Activated T-helper 1 cell treated with anti-CD3 and anti-CD28 coated beads, Interleukin-12 subunit alpha, Interleukin-12 subunit beta, Interleukin-2, Interleukin-4 antibody, amounts not matched to agents 30 ng/mL and 10 ng/mL and 1 ng/mL, durations not matched to agents 14 hours and 24 hours and 36 hours (primary cell): ENCODE measurements at regions of chr11 and their contacts with region 1.

Region 1: DNA sequence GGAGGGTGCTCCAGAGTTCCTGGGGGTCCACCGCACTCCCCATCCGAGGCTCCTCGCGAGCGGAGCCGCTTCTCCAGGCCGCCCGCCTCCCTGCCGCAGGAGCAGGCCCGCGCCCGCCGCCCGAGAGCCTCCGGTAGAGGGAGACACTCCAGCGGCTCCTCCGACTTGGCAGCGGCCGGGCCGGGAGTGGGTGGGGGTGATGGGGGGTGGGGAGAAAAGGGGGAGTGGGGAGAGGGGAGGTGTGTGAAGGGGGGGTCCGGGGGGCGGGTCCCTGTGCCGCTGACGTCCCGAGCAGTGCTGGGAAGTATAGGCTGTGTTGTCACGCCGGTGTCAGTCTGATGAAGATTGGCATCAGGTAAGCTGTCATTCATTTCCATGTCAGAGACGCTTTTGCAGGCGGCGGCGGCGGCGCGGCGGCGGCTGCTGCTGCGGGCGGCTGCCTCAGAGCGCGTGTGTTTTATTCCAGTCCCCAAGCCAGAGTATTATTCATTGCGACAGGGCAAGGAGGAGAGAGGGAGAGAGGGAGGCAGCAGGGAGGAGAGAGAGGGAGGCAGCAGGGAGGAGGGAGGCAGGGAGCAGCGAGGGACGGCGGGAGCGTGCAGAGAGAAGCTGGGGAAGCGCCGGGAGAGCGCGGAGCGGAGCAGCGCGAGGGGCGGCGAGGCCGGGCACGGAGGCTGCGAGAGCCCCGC is at the start of gene PKNOX2:
- DNase-seq: peak; percentile 39
- H3K4me3 Mint-ChIP-seq: peak within 1 kb of the TSS; percentile 91
- H3K27ac Mint-ChIP-seq: no peak within 1 kb of the TSS
- H3K4me1 Mint-ChIP-seq: peaks cover 16% of the 10 kb centered on the region
- H3K27me3 Mint-ChIP-seq: peaks cover 65% of the 10 kb centered on the region
- total RNA-seq, gene PKNOX2: not detected in 2 replicates

Region 2: GRCh38 chr11:124724979-124725718 is 439.4 kb before region 1 on chr11:
- intact Hi-C with region 1: no loop called
- DNase-seq: no peak
- H3K4me3 Mint-ChIP-seq: no peak overlapping the region
- H3K27ac Mint-ChIP-seq: no peak overlapping the region
- H3K4me1 Mint-ChIP-seq: no peaks in the 10 kb centered on the region
- H3K27me3 Mint-ChIP-seq: peaks cover 20% of the 10 kb centered on the region

Region 3: GRCh38 chr11:124865921-124866583 is 298.5 kb before region 1 on chr11:
- intact Hi-C with region 1: loop called (anchors 5 kb)
- DNase-seq: peak; percentile 28
- H3K4me3 Mint-ChIP-seq: no peak overlapping the region
- H3K27ac Mint-ChIP-seq: no peak overlapping the region
- H3K4me1 Mint-ChIP-seq: peaks cover 16% of the 10 kb centered on the region
- H3K27me3 Mint-ChIP-seq: peaks cover 88% of the 10 kb centered on the region

Region 4: GRCh38 chr11:125404776-125405435 is 240.3 kb after region 1 on chr11:
- intact Hi-C with region 1: loop called (anchors 10 kb)
- DNase-seq: peak; percentile 48
- H3K4me3 Mint-ChIP-seq: no peak overlapping the region
- H3K27ac Mint-ChIP-seq: no peak overlapping the region
- H3K4me1 Mint-ChIP-seq: peaks cover 7% of the 10 kb centered on the region
- H3K27me3 Mint-ChIP-seq: peaks cover 43% of the 10 kb centered on the region